CD4-positive, alpha-beta memory T cell (primary cell): ENCODE measurements at regions of chr6 and their contacts with region 1.

Region 1: GRCh38 chr6:35240840-35241801 is 18.4 kb upstream of the ZNF76 start:
- DNase-seq: peak; percentile 53 to 66 (median 62)
- H3K4me3 ChIP-seq: no peak overlapping the region
- H3K4me3 Mint-ChIP-seq: no peak overlapping the region
- H3K27ac ChIP-seq: no peak overlapping the region
- H3K27ac Mint-ChIP-seq: peak overlapping the region in 1 of 7 donors; percentile 60
- H3K4me1 ChIP-seq: no peaks in the 10 kb centered on the region
- H3K4me1 Mint-ChIP-seq: peaks cover 3 to 6% (median 5%) of the 10 kb centered on the region in 4 donors
- H3K27me3 ChIP-seq: no peaks in the 10 kb centered on the region
- H3K27me3 Mint-ChIP-seq: no peaks in the 10 kb centered on the region

Region 2: DNA sequence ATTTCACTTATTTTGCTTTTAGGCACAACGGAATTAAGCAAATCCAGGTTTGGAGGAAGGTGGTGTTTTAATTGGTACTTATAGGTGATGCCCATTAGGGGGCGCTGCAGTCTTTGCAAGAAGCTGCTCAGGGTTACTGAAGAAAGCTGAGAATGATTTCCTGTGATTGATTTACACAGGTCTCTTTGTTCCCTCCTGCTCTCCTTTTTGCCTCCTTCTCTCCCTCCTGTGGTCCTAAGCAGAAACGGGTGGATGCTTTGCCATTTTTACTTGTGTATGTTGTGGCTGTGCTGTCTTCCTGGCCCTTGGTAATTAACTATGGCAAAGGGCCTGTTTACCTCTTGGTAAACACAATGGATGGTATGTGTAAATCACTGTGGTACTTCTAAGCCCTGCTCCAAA is 254.3 kb before region 1 on chr6:
- CTCF ChIA-PET with region 1: interaction called, 12 read pairs
- POLR2A ChIA-PET with region 1: no interaction called
- intact Hi-C with region 1: loop called (anchors 1 kb)
- DNase-seq: peak; percentile 45 to 60 (median 52)
- H3K4me3 ChIP-seq: no peak overlapping the region
- H3K4me3 Mint-ChIP-seq: no peak overlapping the region
- H3K27ac ChIP-seq: no peak overlapping the region
- H3K27ac Mint-ChIP-seq: no peak overlapping the region
- H3K4me1 ChIP-seq: no peaks in the 10 kb centered on the region
- H3K4me1 Mint-ChIP-seq: no peaks in the 10 kb centered on the region
- H3K27me3 ChIP-seq: no peaks in the 10 kb centered on the region
- H3K27me3 Mint-ChIP-seq: no peaks in the 10 kb centered on the region

Region 3: GRCh38 chr6:35202066-35202546 is 39.0 kb before region 1 on chr6:
- CTCF ChIA-PET with region 1: interaction called, 10 read pairs
- POLR2A ChIA-PET with region 1: no interaction called
- intact Hi-C with region 1: no loop called
- DNase-seq: no peak
- H3K4me3 ChIP-seq: no peak overlapping the region
- H3K4me3 Mint-ChIP-seq: no peak overlapping the region
- H3K27ac ChIP-seq: no peak overlapping the region
- H3K27ac Mint-ChIP-seq: no peak overlapping the region
- H3K4me1 ChIP-seq: no peaks in the 10 kb centered on the region
- H3K4me1 Mint-ChIP-seq: peaks cover 0 to 2% (median 0%) of the 10 kb centered on the region in 4 donors
- H3K27me3 ChIP-seq: peaks cover 19% of the 10 kb centered on the region
- H3K27me3 Mint-ChIP-seq: peaks cover 32 to 54% of the 10 kb centered on the region in 2 donors

Region 4: GRCh38 chr6:35230950-35231349 is 10.2 kb before region 1 on chr6:
- CTCF ChIA-PET with region 1: interaction called, 26 read pairs
- POLR2A ChIA-PET with region 1: no interaction called
- intact Hi-C with region 1: no loop called
- DNase-seq: no peak
- H3K4me3 ChIP-seq: no peak overlapping the region
- H3K4me3 Mint-ChIP-seq: no peak overlapping the region
- H3K27ac ChIP-seq: no peak overlapping the region
- H3K27ac Mint-ChIP-seq: no peak overlapping the region
- H3K4me1 ChIP-seq: no peaks in the 10 kb centered on the region
- H3K4me1 Mint-ChIP-seq: peaks cover 0 to 2% (median 0%) of the 10 kb centered on the region in 4 donors
- H3K27me3 ChIP-seq: no peaks in the 10 kb centered on the region
- H3K27me3 Mint-ChIP-seq: no peaks in the 10 kb centered on the region

Region 5: DNA sequence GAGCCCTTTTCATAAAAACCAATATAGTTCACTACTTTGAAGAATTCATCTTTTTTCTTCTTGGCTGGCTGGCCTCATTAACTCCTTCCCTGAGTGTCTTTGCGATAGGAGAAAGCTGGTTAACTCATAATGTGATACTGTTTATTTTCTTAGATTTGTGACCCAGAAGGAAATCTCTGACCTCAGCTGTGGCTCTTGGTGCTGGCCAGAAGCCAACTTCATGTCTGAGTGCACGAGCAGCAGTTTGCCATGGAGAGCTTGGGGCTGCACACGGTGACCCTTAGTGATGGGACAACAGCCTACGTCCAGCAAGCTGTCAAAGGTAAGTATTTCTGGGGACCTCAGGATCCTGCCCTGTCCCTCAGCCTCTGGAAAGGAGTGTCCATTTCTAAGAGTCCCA is 39.8 kb after region 1 on chr6:
- CTCF ChIA-PET with region 1: interaction called, 11 read pairs
- POLR2A ChIA-PET with region 1: no interaction called
- intact Hi-C with region 1: no loop called
- DNase-seq: no peak
- H3K4me3 ChIP-seq: no peak overlapping the region
- H3K4me3 Mint-ChIP-seq: no peak overlapping the region
- H3K27ac ChIP-seq: no peak overlapping the region
- H3K27ac Mint-ChIP-seq: peak overlapping the region in 2 of 7 donors; percentile 27 to 70
- H3K4me1 ChIP-seq: no peaks in the 10 kb centered on the region
- H3K4me1 Mint-ChIP-seq: peaks cover 5 to 8% (median 6%) of the 10 kb centered on the region in 4 donors
- H3K27me3 ChIP-seq: no peaks in the 10 kb centered on the region
- H3K27me3 Mint-ChIP-seq: no peaks in the 10 kb centered on the region

Region 6: DNA sequence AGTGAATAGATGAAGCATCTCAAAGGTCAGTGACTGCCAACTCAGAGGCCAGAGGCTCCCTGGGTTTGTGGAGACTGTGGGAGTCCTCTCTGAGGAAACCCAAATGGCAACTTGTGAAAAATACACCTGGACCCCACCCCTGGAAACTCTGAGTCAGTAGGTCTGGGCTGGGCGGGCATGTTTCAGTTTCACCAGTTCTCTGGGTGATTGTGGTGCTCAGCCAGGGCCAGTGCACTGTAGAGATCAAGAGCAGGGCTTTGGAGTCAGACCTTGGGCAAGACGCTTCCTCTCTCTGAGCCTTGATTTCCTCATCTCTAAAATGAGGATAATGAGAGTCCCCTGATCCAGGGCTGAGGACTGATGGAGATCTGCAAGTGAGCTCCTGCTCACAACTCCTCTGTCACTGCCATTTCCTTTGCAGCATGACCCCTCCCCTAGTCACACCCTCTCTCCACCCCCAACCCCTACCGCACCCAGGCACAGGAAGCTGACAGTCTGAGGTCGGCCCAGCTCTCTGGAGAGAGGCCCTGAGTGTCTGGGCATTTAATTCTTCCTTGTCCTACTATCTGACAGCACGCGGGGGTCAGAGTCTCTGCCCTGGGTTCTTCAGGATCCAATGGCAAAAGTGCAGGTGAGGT is 61.6 kb after region 1 on chr6:
- CTCF ChIA-PET with region 1: no interaction called
- POLR2A ChIA-PET with region 1: no interaction called
- intact Hi-C with region 1: no loop called
- DNase-seq: peak; percentile 86 to 97 (median 87)
- H3K4me3 ChIP-seq: peak overlapping the region; percentile 45 to 62
- H3K4me3 Mint-ChIP-seq: peak overlapping the region; percentile 89 to 96 (median 92)
- H3K27ac ChIP-seq: peak overlapping the region; percentile 88
- H3K27ac Mint-ChIP-seq: peak overlapping the region; percentile 92 to 99 (median 98)
- H3K4me1 ChIP-seq: peaks cover 86% of the 10 kb centered on the region
- H3K4me1 Mint-ChIP-seq: peaks cover 42 to 83% (median 65%) of the 10 kb centered on the region in 4 donors
- H3K27me3 ChIP-seq: no peaks in the 10 kb centered on the region
- H3K27me3 Mint-ChIP-seq: no peaks in the 10 kb centered on the region